AG04449 (cell line): ENCODE measurements at regions of chr3 and their contacts with region 1.

Region 1: DNA sequence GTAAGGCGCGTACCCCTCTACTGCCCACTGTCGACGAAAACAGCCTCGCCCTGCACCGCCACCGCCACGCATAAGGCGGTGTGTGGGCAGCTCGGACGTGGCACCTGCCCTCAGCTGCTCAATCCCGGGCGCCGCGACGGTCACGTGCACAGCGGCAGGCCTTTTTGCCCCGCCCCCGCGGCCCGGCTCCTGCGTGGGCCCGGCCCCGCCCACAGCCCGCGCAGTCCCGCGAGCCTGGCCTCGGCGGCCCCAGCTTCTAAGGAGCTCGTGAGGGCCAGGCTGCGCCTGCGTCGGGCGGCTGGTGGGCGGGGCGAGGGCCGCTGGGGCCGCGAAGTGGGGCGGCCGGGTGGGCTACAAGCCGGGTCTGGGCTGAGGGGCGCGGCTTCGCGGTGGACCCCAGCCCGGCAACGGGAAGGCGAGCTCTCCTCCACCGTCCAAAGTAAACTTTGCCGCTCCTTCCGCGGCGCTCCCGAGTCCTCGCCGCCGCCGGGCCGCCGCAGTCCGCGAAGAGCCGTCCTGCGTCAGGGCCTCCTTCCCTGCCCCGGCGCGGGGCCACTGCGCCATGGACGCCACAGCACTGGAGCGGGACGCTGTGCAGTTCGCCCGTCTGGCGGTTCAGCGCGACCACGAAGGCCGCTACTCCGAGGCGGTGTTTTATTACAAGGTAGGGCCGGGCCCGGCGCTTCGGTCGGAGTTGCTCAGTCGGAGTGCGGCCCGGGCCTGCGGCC is at the start of gene CAPN7:
- DNase-seq: peak; percentile 46
- H3K4me3 ChIP-seq: peak within 1 kb of the TSS; percentile 86
- CTCF ChIP-seq: peak; percentile 55

Region 2: DNA sequence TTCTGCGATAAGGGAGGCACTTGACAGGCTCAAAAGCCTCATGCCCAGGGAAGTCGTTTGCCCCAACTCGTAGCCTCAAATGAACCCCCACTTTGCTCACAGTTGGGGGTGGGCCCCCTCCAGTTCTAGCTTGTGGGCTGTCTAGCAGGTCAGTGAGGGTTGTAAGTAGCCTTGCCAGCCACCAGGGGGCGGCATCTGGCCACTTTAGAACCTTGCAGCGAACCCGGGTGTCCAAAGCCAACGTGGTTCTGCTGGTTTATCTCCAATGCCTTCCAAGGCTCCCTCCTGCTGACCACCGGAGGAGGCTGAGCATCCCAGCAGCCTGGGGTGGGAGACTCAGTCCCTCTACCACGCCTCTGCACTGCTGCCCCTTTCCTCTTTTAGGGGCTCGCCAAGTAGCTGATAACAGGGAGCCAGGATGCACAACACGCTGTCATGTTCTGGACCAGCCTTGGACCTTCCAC is 98.0 kb before region 1 on chr3:
- CTCF ChIA-PET with region 1: interaction called, 53 read pairs
- POLR2A ChIA-PET with region 1: no interaction called
- DNase-seq: no peak
- H3K4me3 ChIP-seq: no peak overlapping the region
- CTCF ChIP-seq: peak; percentile 86

Region 3: DNA sequence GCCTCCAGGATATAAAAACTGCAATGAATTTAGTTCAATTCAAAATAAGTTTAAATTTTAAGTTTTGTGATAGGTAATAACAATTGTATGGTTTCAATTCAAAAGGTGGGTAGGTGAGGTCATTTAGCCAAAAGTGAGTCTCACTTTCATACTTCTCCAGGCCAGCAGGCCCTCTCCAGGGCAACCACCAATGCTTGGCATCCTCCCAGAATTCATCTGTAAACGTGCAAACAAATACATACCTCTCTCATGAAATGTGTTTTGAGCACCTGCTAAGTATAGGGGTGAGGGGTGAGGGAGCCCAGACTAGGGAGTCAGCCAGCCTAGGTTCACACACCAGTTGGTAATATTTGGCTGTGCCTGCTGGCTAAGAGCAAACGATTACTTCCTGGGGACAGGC is 85.1 kb before region 1 on chr3:
- CTCF ChIA-PET with region 1: interaction called, 11 read pairs
- POLR2A ChIA-PET with region 1: no interaction called
- DNase-seq: no peak
- H3K4me3 ChIP-seq: no peak overlapping the region
- CTCF ChIP-seq: no peak

Region 4: GRCh38 chr3:15241341-15241740 is 35.2 kb after region 1 on chr3:
- CTCF ChIA-PET with region 1: interaction called, 15 read pairs
- POLR2A ChIA-PET with region 1: interaction called, 4 read pairs
- DNase-seq: no peak
- H3K4me3 ChIP-seq: no peak overlapping the region
- CTCF ChIP-seq: no peak

Region 5: GRCh38 chr3:15557511-15557946 is 351.4 kb after region 1 on chr3:
- CTCF ChIA-PET with region 1: interaction called, 93 read pairs
- POLR2A ChIA-PET with region 1: no interaction called
- DNase-seq: peak; percentile 41
- H3K4me3 ChIP-seq: no peak overlapping the region
- CTCF ChIP-seq: peak; percentile 39